IMR-90 (cell line): ENCODE measurements at regions of chr5 and their contacts with region 1.

Region 1: GRCh38 chr5:55923177-55923771 is 71.5 kb downstream of the IL6ST start:
- DNase-seq: no peak
- ATAC-seq: peak; percentile 18; the same call in 1 of the 2 replicates
- H3K4me3 ChIP-seq: no peak overlapping the region
- H3K27ac ChIP-seq: no peak overlapping the region; the same call in 1 of the 2 replicates
- H3K4me1 ChIP-seq: peaks cover 2% of the 10 kb centered on the region; the same call in 1 of the 2 replicates
- H3K27me3 ChIP-seq: no peaks in the 10 kb centered on the region
- CTCF ChIP-seq: no peak
- POLR2A ChIP-seq: no peak
- RAD21 ChIP-seq: no peak

Region 2: DNA sequence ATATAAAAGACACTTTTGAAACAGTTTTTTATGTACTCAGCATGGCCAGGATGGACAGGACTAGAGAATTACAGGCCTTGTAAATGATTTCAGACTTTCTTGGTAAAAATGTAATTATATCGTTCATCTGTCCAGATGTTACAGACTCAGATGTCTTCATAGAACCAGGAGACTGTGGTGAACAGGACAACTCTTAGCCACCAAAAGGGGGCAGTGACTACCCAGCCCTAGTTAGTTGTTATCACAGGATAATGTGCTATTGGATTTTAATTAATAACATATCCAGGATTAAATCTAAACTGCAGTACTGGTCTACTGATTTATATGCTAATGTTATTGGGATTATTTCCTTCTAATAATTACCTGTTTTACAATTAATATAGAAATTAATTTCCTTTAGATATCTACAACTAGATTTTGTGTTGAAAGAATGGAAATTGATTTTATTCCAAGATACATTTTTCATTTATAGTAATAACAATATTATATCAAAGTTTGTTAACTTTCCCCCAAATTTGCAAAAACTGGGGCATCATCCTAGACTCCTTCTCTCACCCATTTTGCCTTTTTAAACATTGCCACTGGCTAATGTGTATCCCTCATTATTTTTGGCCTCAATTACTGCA is 516.1 kb before region 1 on chr5:
- CTCF ChIA-PET with region 1: no interaction called
- POLR2A ChIA-PET with region 1: no interaction called
- dilution Hi-C with region 1: no loop called
- in situ Hi-C with region 1: no loop called
- intact Hi-C with region 1: loop called (anchors 5 kb)
- DNase-seq: peak; percentile 64
- ATAC-seq: peak; percentile 87
- H3K4me3 ChIP-seq: no peak overlapping the region
- H3K27ac ChIP-seq: no peak overlapping the region
- H3K4me1 ChIP-seq: 0 out of 2 replicates have a peak, but pooled peaks cover 2% of the 10 kb centered on the region
- H3K27me3 ChIP-seq: no peaks in the 10 kb centered on the region
- CTCF ChIP-seq: peak; percentile 79
- POLR2A ChIP-seq: no peak
- RAD21 ChIP-seq: peak; percentile 85

Region 3: DNA sequence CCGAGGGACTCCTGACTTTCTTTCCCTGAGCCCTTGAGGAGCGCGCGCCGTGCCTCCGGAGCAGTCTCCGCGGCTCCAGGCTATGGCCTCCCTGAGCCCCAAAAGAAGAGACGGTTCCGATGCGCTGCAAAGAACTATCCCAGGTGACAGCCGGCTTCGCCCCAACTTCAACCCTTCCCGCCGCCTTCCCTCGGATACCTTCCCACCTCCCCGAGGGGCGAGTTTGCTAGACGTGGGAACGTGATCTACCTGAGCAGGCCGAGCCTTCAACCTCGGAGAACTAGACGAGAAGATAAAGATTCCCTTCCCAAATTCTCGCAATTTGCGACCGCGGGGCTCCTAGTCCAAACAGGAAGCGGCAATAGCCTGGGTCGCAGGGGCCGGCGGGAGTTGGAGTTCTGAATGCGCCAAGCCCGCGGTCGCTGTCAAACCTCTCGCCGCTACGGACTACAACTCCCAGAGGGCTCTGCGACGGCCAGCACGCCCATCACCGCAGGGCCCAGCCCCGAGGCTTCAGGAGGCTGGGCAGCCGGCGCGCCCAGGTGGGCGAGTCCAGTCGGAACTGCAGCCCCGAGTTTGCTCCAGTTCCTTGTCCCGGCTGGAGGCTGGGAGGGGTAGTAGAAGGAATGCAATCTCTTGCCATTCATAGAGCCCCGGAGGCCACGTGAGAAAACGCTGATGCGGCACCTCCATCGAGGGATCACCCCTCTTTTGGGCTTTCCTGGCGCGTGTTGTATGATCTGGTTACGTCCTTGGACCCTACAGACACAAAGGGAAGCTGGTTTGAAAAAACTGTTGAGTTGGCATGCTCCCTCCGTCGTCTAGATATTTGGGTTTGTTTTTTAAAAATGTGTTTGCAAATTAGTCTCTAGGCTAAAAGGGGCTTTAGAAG is 211.1 kb before region 1 on chr5 and contains the start of gene SLC38A9:
- CTCF ChIA-PET with region 1: no interaction called
- POLR2A ChIA-PET with region 1: no interaction called
- dilution Hi-C with region 1: no loop called
- in situ Hi-C with region 1: no loop called
- intact Hi-C with region 1: loop called (anchors 5 kb)
- DNase-seq: peak; percentile 91
- ATAC-seq: peak; percentile 100
- H3K4me3 ChIP-seq: peak within 1 kb of the TSS; percentile 82
- H3K27ac ChIP-seq: peak within 1 kb of the TSS; percentile 81
- H3K4me1 ChIP-seq: peaks cover 2% of the 10 kb centered on the region; the same call in 1 of the 2 replicates
- H3K27me3 ChIP-seq: no peaks in the 10 kb centered on the region
- CTCF ChIP-seq: no peak
- POLR2A ChIP-seq: no peak
- RAD21 ChIP-seq: no peak; the same call in 1 of the 2 replicates
- total RNA-seq, gene SLC38A9: 20.8 and 24.2 TPM in 2 replicates

Region 4: GRCh38 chr5:55771175-55771655 is 152.1 kb before region 1 on chr5:
- CTCF ChIA-PET with region 1: no interaction called
- POLR2A ChIA-PET with region 1: no interaction called
- dilution Hi-C with region 1: no loop called
- in situ Hi-C with region 1: no loop called
- intact Hi-C with region 1: no loop called
- DNase-seq: no peak
- ATAC-seq: no peak
- H3K4me3 ChIP-seq: no peak overlapping the region
- H3K27ac ChIP-seq: no peak overlapping the region
- H3K4me1 ChIP-seq: no peaks in the 10 kb centered on the region; the same call in 1 of the 2 replicates
- H3K27me3 ChIP-seq: no peaks in the 10 kb centered on the region
- CTCF ChIP-seq: no peak
- POLR2A ChIP-seq: no peak
- RAD21 ChIP-seq: no peak

Region 5: GRCh38 chr5:56328753-56329560 is 405.7 kb after region 1 on chr5:
- CTCF ChIA-PET with region 1: no interaction called
- POLR2A ChIA-PET with region 1: no interaction called
- dilution Hi-C with region 1: no loop called
- in situ Hi-C with region 1: no loop called
- intact Hi-C with region 1: no loop called
- DNase-seq: peak; percentile 76
- ATAC-seq: peak; percentile 62
- H3K4me3 ChIP-seq: no peak overlapping the region
- H3K27ac ChIP-seq: peak overlapping the region; percentile 17; the same call in 1 of the 2 replicates
- H3K4me1 ChIP-seq: peaks cover 3% of the 10 kb centered on the region
- H3K27me3 ChIP-seq: no peaks in the 10 kb centered on the region
- CTCF ChIP-seq: no peak
- POLR2A ChIP-seq: no peak
- RAD21 ChIP-seq: no peak

Region 6: GRCh38 chr5:56676091-56676768 is 753.0 kb after region 1 on chr5:
- CTCF ChIA-PET with region 1: no interaction called
- POLR2A ChIA-PET with region 1: no interaction called
- dilution Hi-C with region 1: no loop called
- in situ Hi-C with region 1: no loop called
- intact Hi-C with region 1: no loop called
- DNase-seq: no peak
- ATAC-seq: no peak
- H3K4me3 ChIP-seq: no peak overlapping the region
- H3K27ac ChIP-seq: no peak overlapping the region
- H3K4me1 ChIP-seq: 0 out of 2 replicates have a peak, but pooled peaks cover under 1% of the 10 kb centered on the region
- H3K27me3 ChIP-seq: no peaks in the 10 kb centered on the region
- CTCF ChIP-seq: no peak
- POLR2A ChIP-seq: no peak
- RAD21 ChIP-seq: no peak